ENCODE measurements at regions of chr6 and their contacts with region 1.

Region 1: GRCh38 chr6:52995913-52996645 is 995 bp upstream of the GSTA4 start:
- DNase-seq: peak; percentile 55
- ATAC-seq: no peak
- H3K4me3 Mint-ChIP-seq: peak overlapping the region; percentile 94
- H3K27ac Mint-ChIP-seq: peak overlapping the region; percentile 95
- H3K4me1 Mint-ChIP-seq: peaks cover 22% of the 10 kb centered on the region
- H3K27me3 Mint-ChIP-seq: peaks cover 13% of the 10 kb centered on the region
- CTCF ChIP-seq: no peak

Region 2: DNA sequence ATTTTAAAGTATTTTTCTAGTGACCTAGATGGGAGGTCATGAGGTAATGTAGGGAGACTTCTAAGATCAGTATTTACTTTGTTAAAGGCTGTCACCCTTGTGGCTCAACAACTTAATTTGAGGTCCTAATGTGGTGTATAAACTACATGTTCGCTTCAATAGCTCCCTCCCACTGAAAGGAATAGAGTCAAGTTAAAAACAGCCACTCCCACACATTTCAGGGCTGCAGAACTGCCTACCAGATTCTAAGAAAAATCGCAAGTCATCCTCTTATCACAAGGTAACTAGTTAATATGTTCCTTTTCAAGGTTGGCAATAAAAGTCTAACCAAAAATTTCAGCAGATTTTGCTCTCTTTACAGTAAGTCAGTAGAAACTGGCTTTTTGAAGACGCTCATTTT is 207.6 kb before region 1 on chr6:
- CTCF ChIA-PET with region 1: no interaction called
- POLR2A ChIA-PET with region 1: no interaction called
- intact Hi-C with region 1: no loop called
- DNase-seq: no peak
- ATAC-seq: no peak
- H3K4me3 Mint-ChIP-seq: no peak overlapping the region
- H3K27ac Mint-ChIP-seq: no peak overlapping the region
- H3K4me1 Mint-ChIP-seq: no peaks in the 10 kb centered on the region
- H3K27me3 Mint-ChIP-seq: peaks cover 5% of the 10 kb centered on the region
- CTCF ChIP-seq: no peak

Region 3: DNA sequence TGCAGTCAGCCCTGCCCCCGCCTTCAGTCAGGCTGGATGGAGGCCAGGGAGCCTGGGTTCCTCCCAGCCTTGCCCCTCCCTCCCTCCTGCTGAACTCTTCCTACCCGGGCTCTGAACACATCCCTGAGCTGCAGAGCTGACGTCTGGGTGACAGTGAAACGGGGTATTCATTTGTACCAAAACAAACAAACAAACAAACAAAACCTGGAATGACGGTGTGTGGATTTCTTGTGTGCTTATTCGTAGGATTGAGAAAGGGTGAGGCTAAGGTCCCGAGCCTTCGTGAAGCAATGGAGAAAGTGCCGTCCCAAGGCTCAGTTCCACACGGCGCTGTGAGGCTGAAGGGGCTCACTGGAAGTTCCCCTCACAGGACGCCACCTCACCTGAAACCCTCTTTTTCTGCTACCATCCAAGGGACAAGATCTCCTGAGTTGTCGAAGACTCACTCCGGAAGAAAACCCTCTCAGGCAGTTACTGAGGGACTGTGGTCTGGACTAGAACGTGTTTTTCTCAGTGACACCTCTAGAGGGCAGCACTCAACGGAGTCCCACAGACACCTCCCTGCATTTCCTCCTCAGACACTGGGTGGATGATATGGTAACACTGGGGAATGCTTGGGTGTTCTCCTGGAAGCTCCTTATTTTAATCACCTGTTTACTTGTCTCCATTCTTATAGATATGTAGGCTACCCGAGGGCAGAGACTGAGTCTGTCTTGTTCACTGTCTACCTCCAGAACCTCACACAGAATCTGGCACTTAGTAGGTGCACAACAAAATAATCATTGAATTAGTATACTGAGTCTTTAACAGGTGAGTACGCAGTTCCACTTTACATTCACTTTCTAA is 113.9 kb before region 1 on chr6:
- CTCF ChIA-PET with region 1: interaction called, 12 read pairs
- POLR2A ChIA-PET with region 1: no interaction called
- intact Hi-C with region 1: no loop called
- DNase-seq: peak; percentile 78
- ATAC-seq: peak; percentile 99
- H3K4me3 Mint-ChIP-seq: peak overlapping the region; percentile 79
- H3K27ac Mint-ChIP-seq: peak overlapping the region; percentile 72
- H3K4me1 Mint-ChIP-seq: peaks cover 8% of the 10 kb centered on the region
- H3K27me3 Mint-ChIP-seq: no peaks in the 10 kb centered on the region
- CTCF ChIP-seq: peak; percentile 78

Region 4: DNA sequence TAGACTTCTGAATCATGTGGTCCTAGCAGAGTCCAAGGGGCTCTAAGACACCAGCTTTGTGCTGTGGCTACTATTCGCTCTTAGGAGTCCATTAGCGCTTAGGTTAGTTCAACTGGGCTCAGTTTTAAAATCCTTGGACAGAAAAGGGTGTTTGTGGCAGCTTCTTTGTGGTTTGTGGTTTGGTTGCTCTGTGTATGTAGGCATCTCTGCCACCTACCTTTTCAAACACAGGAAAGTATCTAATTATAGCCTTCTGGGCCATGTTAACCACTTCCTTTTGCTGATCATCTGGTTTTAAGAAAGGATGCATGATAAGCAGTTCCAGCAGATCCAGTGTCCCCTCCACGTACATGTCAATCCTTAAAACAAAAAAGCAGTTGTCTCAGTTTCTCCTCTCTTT is 11.8 kb before region 1 on chr6:
- CTCF ChIA-PET with region 1: interaction called, 14 read pairs
- POLR2A ChIA-PET with region 1: interaction called, 16 read pairs
- intact Hi-C with region 1: no loop called
- DNase-seq: peak; percentile 80
- ATAC-seq: peak; percentile 80
- H3K4me3 Mint-ChIP-seq: peak overlapping the region; percentile 25
- H3K27ac Mint-ChIP-seq: peak overlapping the region; percentile 69
- H3K4me1 Mint-ChIP-seq: peaks cover 60% of the 10 kb centered on the region
- H3K27me3 Mint-ChIP-seq: peaks cover 26% of the 10 kb centered on the region
- CTCF ChIP-seq: no peak

Region 5: GRCh38 chr6:53056273-53056672 is 60.2 kb after region 1 on chr6:
- CTCF ChIA-PET with region 1: interaction called, 10 read pairs
- POLR2A ChIA-PET with region 1: interaction called, 8 read pairs
- intact Hi-C with region 1: no loop called
- DNase-seq: no peak
- ATAC-seq: no peak
- H3K4me3 Mint-ChIP-seq: no peak overlapping the region
- H3K27ac Mint-ChIP-seq: no peak overlapping the region
- H3K4me1 Mint-ChIP-seq: peaks cover 34% of the 10 kb centered on the region
- H3K27me3 Mint-ChIP-seq: no peaks in the 10 kb centered on the region
- CTCF ChIP-seq: no peak

Region 6: GRCh38 chr6:53064726-53065215 is 68.7 kb after region 1 on chr6:
- CTCF ChIA-PET with region 1: interaction called, 25 read pairs
- POLR2A ChIA-PET with region 1: interaction called, 7 read pairs
- intact Hi-C with region 1: no loop called
- DNase-seq: peak; percentile 98
- ATAC-seq: peak; percentile 83
- H3K4me3 Mint-ChIP-seq: peak overlapping the region; percentile 86
- H3K27ac Mint-ChIP-seq: peak overlapping the region; percentile 97
- H3K4me1 Mint-ChIP-seq: peaks cover 55% of the 10 kb centered on the region
- H3K27me3 Mint-ChIP-seq: no peaks in the 10 kb centered on the region
- CTCF ChIP-seq: no peak

Region 7: DNA sequence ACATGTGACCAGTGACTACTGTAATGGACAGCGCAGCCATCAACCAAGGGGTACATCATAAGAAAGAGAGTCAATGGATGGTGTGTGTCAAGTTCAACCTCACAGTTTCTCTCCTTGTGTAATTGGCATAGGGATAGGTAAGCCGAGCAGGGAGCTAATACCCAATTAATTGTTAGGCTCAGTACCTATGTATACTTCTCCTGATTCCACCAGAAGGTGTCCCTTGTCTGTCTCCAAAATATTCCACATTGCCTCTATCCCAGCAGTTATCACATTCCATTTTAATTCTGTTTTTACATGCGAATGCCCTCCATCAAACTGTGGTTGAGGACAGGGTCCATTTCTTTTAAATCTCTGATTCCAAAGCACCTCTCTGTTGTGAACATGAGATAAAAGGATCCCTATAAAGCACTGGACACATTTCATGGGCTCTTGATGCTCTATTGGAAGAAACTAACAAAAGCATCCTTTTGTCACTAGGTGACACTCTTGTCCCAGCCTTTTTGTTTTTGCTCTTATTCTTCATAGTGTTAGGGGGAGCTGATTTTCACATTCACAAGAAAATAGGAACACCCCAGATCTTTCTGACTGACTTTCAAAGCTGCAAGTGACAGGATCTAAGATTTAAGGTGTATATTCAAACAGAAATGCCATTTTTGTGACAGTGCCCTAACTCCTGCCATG is 108.1 kb after region 1 on chr6:
- CTCF ChIA-PET with region 1: no interaction called
- POLR2A ChIA-PET with region 1: no interaction called
- intact Hi-C with region 1: no loop called
- DNase-seq: no peak
- ATAC-seq: no peak
- H3K4me3 Mint-ChIP-seq: no peak overlapping the region
- H3K27ac Mint-ChIP-seq: no peak overlapping the region
- H3K4me1 Mint-ChIP-seq: no peaks in the 10 kb centered on the region
- H3K27me3 Mint-ChIP-seq: no peaks in the 10 kb centered on the region
- CTCF ChIP-seq: peak; percentile 24